ENCODE measurements at regions of chr1 and their contacts with region 1.

Region 1: GRCh38 chr1:67500413-67500959 is 70.3 kb upstream of the SERBP1 start:
- DNase-seq: peak; percentile 55
- ATAC-seq: peak; percentile 100
- H3K4me3 ChIP-seq: no peak overlapping the region
- H3K27ac ChIP-seq: no peak overlapping the region
- H3K4me1 ChIP-seq: peaks cover 3% of the 10 kb centered on the region; the same call in 1 of the 2 replicates
- H3K27me3 ChIP-seq: 0 out of 4 replicates have a peak, but pooled peaks cover 0 to 2% of the 10 kb centered on the region in 2 experiments
- CTCF ChIP-seq: peak; percentile 97 to 99 (median 99); a peak in 5 of 6 replicates
- EP300 ChIP-seq: no peak
- POLR2A ChIP-seq: no peak
- RAD21 ChIP-seq: peak; percentile 100

Region 2: GRCh38 chr1:66996018-66996682 is 504.3 kb before region 1 on chr1:
- CTCF ChIA-PET with region 1: interaction called, 14 read pairs
- POLR2A ChIA-PET with region 1: no interaction called
- RAD21 ChIA-PET with region 1: interaction called, 12 read pairs
- SMC1A ChIA-PET with region 1: interaction called, 7 read pairs
- in situ Hi-C with region 1: loop called (anchors 10 kb)
- intact Hi-C with region 1: loop called (anchors 5 kb)
- DNase-seq: peak; percentile 59
- ATAC-seq: peak; percentile 89
- H3K4me3 ChIP-seq: no peak overlapping the region
- H3K27ac ChIP-seq: no peak overlapping the region
- H3K4me1 ChIP-seq: no peaks in the 10 kb centered on the region
- H3K27me3 ChIP-seq: no peaks in the 10 kb centered on the region
- CTCF ChIP-seq: peak; percentile 76 to 85 (median 81)
- EP300 ChIP-seq: no peak
- POLR2A ChIP-seq: no peak
- RAD21 ChIP-seq: peak; percentile 94

Region 3: GRCh38 chr1:67227196-67227595 is 273.3 kb before region 1 on chr1:
- CTCF ChIA-PET with region 1: interaction called, 5 read pairs
- POLR2A ChIA-PET with region 1: no interaction called
- RAD21 ChIA-PET with region 1: no interaction called
- SMC1A ChIA-PET with region 1: interaction called, 3 read pairs
- in situ Hi-C with region 1: loop called (anchors 5 kb)
- intact Hi-C with region 1: no loop called
- DNase-seq: no peak
- ATAC-seq: no peak
- H3K4me3 ChIP-seq: no peak overlapping the region
- H3K27ac ChIP-seq: no peak overlapping the region
- H3K4me1 ChIP-seq: no peaks in the 10 kb centered on the region
- H3K27me3 ChIP-seq: no peaks in the 10 kb centered on the region; a peak in 1 of 4 replicates
- CTCF ChIP-seq: no peak
- EP300 ChIP-seq: no peak
- POLR2A ChIP-seq: no peak
- RAD21 ChIP-seq: no peak

Region 4: GRCh38 chr1:67347688-67348472 is 152.6 kb before region 1 on chr1:
- CTCF ChIA-PET with region 1: interaction called, 87 read pairs
- POLR2A ChIA-PET with region 1: interaction called, 6 read pairs
- RAD21 ChIA-PET with region 1: interaction called, 39 read pairs
- SMC1A ChIA-PET with region 1: interaction called, 31 read pairs
- in situ Hi-C with region 1: loop called (anchors 5 kb)
- intact Hi-C with region 1: loop called (anchors 1 kb)
- DNase-seq: no peak
- ATAC-seq: peak; percentile 85
- H3K4me3 ChIP-seq: no peak overlapping the region
- H3K27ac ChIP-seq: no peak overlapping the region
- H3K4me1 ChIP-seq: peaks cover 7% of the 10 kb centered on the region
- H3K27me3 ChIP-seq: no peaks in the 10 kb centered on the region
- CTCF ChIP-seq: peak; percentile 62 to 70 (median 68)
- EP300 ChIP-seq: no peak
- POLR2A ChIP-seq: no peak
- RAD21 ChIP-seq: peak; percentile 71

Region 5: DNA sequence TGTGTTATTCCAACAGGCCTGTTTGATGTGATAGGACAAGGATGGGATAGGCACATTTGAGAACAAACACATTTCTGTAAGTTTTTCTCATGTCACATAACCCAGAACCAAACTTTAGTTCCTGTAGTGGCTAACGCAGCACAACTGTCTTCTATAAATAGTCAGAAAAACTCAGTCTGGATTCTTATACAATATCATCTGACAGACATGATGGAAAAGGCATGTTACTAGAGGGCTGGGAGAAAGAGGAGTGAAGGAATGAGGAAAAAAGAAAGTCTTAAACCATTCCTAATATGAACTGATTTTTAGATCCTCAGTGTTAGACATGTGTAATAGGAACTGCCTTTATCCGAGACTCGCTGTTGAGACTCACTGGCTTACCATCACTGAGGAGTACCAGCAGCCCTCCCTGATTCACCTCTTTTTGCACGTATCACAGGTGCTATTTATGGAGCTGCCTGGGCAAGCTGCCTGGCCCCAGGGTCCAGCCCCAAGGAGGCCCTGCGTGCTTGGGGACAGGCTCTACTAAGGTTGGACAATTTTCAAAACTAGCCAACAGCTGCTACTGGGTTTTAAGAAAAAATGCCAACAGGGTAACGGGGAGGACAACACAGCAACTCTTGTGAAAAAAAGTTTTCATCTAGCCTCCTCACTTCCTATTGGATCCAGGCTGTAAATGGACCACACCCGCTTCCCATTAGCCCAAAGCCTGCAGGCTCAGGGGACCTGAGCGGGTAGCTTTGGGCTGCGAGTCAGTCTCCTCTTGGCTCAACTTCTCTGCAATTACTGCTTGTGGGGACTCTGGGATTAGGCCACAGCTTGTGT is 39.6 kb before region 1 on chr1:
- CTCF ChIA-PET with region 1: interaction called, 4 read pairs
- POLR2A ChIA-PET with region 1: no interaction called
- RAD21 ChIA-PET with region 1: no interaction called
- SMC1A ChIA-PET with region 1: interaction called, 13 read pairs
- in situ Hi-C with region 1: no loop called
- intact Hi-C with region 1: no loop called
- DNase-seq: no peak
- ATAC-seq: no peak
- H3K4me3 ChIP-seq: no peak overlapping the region
- H3K27ac ChIP-seq: no peak overlapping the region
- H3K4me1 ChIP-seq: no peaks in the 10 kb centered on the region
- H3K27me3 ChIP-seq: peaks cover 0 to 2% of the 10 kb centered on the region in 2 experiments; a peak in 1 of 4 replicates
- CTCF ChIP-seq: no peak
- EP300 ChIP-seq: no peak
- POLR2A ChIP-seq: no peak
- RAD21 ChIP-seq: no peak

Region 6: DNA sequence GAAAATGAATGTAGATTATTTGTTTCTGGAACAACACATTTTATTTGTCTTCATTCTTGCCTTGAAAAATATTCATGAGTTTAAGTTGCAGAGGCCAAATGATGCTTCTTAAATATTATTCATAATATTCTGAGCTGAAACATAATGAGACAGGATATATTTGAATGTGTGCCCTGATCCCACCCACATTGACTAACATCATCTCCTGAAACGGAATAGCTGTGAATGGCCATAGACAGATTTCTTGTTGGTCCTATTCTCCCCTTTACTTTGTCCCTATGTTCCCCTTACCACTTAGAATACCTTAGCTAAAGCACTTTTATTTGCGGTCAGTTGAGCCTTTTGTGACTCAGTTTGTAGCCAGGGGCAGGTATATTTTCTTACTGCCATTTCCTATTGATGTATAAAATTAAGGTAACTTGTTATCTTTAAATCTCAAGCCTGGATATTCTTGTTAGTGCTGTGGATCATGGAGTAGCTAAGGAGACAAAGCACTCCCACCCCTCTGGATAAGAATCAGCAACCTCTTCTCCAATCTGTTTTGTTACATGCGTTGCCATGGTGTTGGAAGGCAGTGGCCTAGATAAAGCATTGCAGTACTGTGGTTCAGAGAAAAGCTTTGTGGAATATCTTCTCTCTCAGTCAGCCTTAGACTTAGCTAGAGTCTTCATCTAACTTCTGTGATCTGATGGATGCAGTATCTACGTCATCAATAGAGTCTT is 1474.9 kb after region 1 on chr1:
- CTCF ChIA-PET with region 1: no interaction called
- POLR2A ChIA-PET with region 1: no interaction called
- RAD21 ChIA-PET with region 1: no interaction called
- SMC1A ChIA-PET with region 1: no interaction called
- in situ Hi-C with region 1: no loop called
- intact Hi-C with region 1: no loop called
- DNase-seq: no peak
- ATAC-seq: no peak
- H3K4me3 ChIP-seq: no peak overlapping the region
- H3K27ac ChIP-seq: no peak overlapping the region
- H3K4me1 ChIP-seq: no peaks in the 10 kb centered on the region
- H3K27me3 ChIP-seq: no peaks in the 10 kb centered on the region
- CTCF ChIP-seq: no peak
- EP300 ChIP-seq: no peak
- POLR2A ChIP-seq: no peak
- RAD21 ChIP-seq: no peak

Measured in GM12878 (cell line).